Common myeloid progenitor, CD34-positive (primary cell): ENCODE measurements at regions of chr5 and their contacts with region 1.

Region 1: GRCh38 chr5:140169410-140169809 is 5.6 kb upstream of the CYSTM1 start:
- DNase-seq: no peak
- H3K4me3 ChIP-seq: no peak overlapping the region
- H3K27ac ChIP-seq: no peak overlapping the region
- H3K4me1 ChIP-seq: peaks cover 2 to 6% (median 3%) of the 10 kb centered on the region in 4 experiments
- H3K27me3 ChIP-seq: peaks cover 0 to 3% (median 0%) of the 10 kb centered on the region in 5 experiments

Region 2: GRCh38 chr5:140157032-140157803 is 12.2 kb before region 1 on chr5:
- CTCF ChIA-PET with region 1: interaction called, 10 read pairs
- POLR2A ChIA-PET with region 1: no interaction called
- DNase-seq: peak; percentile 81 to 91 (median 87)
- H3K4me3 ChIP-seq: peak overlapping the region in 3 of 7 experiments; percentile 50 to 69 (median 55)
- H3K27ac ChIP-seq: no peak overlapping the region
- H3K4me1 ChIP-seq: peaks cover 0 to 17% (median 10%) of the 10 kb centered on the region in 4 experiments
- H3K27me3 ChIP-seq: peaks cover 0 to 7% (median 0%) of the 10 kb centered on the region in 5 experiments